ENCODE measurements at regions of chr3 and their contacts with region 1.

Region 1: GRCh38 chr3:113575206-113575605 is 42.9 kb downstream of the SIDT1 start:
- DNase-seq: no peak
- H3K4me3 ChIP-seq: no peak overlapping the region
- H3K27ac ChIP-seq: no peak overlapping the region
- H3K4me1 ChIP-seq: no peaks in the 10 kb centered on the region
- H3K27me3 ChIP-seq: no peaks in the 10 kb centered on the region
- CTCF ChIP-seq: no peak
- EP300 ChIP-seq: no peak
- POLR2A ChIP-seq: no peak
- RAD21 ChIP-seq: no peak

Region 2: DNA sequence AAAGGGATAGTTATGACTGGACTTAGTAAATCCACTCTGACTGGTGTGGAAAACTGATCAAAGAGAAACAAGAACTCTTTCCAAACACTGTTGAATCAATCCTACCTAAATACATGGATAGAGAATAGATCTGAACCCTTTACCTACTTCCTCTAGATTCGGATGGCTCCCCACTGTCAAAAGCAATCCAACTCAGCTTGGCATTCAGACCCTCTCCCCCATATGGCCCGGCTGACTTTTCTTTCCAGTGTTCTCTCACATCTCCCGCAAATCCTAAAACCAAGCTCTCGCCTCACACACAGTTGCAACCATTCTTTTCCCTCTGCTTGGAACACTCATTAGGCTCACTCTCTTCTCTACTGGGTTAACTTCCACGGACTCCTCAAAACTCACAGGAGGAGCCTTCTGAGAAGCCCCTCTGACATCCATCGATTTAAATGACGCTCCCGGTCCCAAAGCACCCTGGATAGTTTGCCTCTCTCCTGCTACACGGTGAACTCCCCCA is 60.9 kb before region 1 on chr3:
- CTCF ChIA-PET with region 1: interaction called, 17 read pairs
- POLR2A ChIA-PET with region 1: interaction called, 4 read pairs
- DNase-seq: no peak
- H3K4me3 ChIP-seq: peak overlapping the region; percentile 86 to 95 (median 93)
- H3K27ac ChIP-seq: no peak overlapping the region; the same call in 1 of the 2 replicates
- H3K4me1 ChIP-seq: no peaks in the 10 kb centered on the region; a peak in 2 of 7 replicates
- H3K27me3 ChIP-seq: peaks cover 0 to 4% (median under 1%) of the 10 kb centered on the region in 4 experiments; a peak in 2 of 7 replicates
- CTCF ChIP-seq: no peak
- EP300 ChIP-seq: no peak
- POLR2A ChIP-seq: no peak
- RAD21 ChIP-seq: no peak

Region 3: GRCh38 chr3:113552851-113553250 is 22.4 kb before region 1 on chr3:
- CTCF ChIA-PET with region 1: interaction called, 19 read pairs
- POLR2A ChIA-PET with region 1: no interaction called
- DNase-seq: no peak
- H3K4me3 ChIP-seq: no peak overlapping the region
- H3K27ac ChIP-seq: no peak overlapping the region
- H3K4me1 ChIP-seq: no peaks in the 10 kb centered on the region
- H3K27me3 ChIP-seq: no peaks in the 10 kb centered on the region
- CTCF ChIP-seq: peak in 2 of 3 experiments; percentile 36 to 40; a peak in 2 of 4 replicates
- EP300 ChIP-seq: no peak
- POLR2A ChIP-seq: no peak
- RAD21 ChIP-seq: peak; percentile 56 to 70

Region 4: GRCh38 chr3:113589971-113590370 is 14.8 kb after region 1 on chr3:
- CTCF ChIA-PET with region 1: interaction called, 28 read pairs
- POLR2A ChIA-PET with region 1: no interaction called
- DNase-seq: no peak
- H3K4me3 ChIP-seq: no peak overlapping the region
- H3K27ac ChIP-seq: no peak overlapping the region
- H3K4me1 ChIP-seq: peaks cover 0 to 20% (median 6%) of the 10 kb centered on the region in 4 experiments; a peak in 3 of 7 replicates
- H3K27me3 ChIP-seq: no peaks in the 10 kb centered on the region
- CTCF ChIP-seq: no peak
- EP300 ChIP-seq: no peak
- POLR2A ChIP-seq: no peak
- RAD21 ChIP-seq: no peak

Region 5: DNA sequence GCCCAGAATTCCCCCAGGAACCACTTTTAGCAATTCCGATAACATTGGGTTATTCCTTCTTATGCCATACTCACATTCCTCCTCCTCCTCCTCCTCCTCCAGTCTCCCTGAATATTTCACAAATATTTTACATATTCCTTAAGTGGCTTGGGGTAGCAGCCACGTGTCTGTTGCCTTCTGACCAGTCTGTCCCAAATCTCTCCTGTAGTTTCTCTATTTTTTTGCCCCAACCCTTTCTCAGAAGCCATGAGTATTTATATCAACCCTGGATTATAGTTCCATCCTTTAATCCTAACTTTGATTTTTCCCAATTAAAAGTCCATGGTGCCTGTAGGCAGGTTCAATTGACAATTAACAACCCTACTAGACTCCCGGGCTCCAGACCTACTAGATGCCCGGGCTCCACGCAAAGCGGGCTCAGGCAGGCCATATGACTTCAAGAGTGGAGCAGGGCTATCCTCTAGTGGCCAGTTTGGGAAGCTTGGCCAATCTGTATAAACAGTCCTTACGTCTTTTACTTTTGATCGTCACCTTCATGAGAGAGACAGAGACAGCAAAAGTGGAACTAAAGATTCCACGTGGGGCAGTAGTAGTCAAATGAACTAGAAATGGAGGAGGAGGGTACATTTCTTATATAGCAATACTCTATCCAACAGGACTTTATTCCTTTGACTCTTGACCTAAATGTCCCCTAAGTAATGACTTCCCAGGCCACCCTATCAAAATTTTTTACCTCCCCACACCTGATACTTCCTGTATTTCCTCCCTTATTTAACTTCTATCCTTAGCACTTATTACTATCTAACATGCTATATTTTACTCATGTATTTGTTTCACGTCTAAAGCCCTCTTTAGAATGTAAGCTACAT is 51.5 kb after region 1 on chr3:
- CTCF ChIA-PET with region 1: interaction called, 13 read pairs
- POLR2A ChIA-PET with region 1: no interaction called
- DNase-seq: peak; percentile 34 to 67
- H3K4me3 ChIP-seq: no peak overlapping the region
- H3K27ac ChIP-seq: no peak overlapping the region
- H3K4me1 ChIP-seq: no peaks in the 10 kb centered on the region
- H3K27me3 ChIP-seq: no peaks in the 10 kb centered on the region
- CTCF ChIP-seq: peak; percentile 72 to 99 (median 92)
- EP300 ChIP-seq: no peak
- POLR2A ChIP-seq: no peak
- RAD21 ChIP-seq: peak; percentile 98 to 100